ENCODE measurements at regions of chr15 and their contacts with region 1.

Region 1: DNA sequence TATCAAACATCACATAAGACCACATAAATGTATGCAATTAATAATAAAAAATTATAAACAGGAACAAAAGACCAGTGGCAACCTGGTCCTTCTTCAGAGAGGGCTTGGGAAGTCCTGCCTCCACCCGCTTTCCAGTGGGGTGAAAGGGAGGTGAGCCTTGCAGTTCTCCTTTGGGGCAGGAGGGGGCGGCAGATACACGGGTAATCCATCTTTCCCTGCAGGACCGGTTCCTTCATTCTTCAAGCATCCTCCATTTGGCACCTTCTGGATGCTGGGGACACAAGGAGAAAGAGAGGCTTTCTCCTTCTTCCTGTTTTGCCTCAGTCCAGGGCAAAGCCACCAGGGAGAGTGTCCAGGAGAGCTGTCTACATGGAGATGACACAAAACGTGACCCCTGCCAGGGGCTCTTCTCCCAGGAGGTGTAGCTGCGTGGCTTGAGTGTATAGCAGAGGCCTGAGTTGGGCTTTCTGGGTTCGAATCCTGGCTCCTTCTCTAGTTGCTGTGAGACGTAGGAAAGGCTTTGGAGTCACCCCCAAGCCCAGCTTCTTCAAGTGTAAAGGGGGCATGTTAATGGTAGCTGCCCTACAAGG is 23.2 kb downstream of the RPLP1 start:
- DNase-seq: peak; percentile 56
- H3K4me3 ChIP-seq: no peak overlapping the region
- H3K27ac ChIP-seq: no peak overlapping the region
- H3K4me1 ChIP-seq: no peaks in the 10 kb centered on the region
- CTCF ChIP-seq: peak; percentile 87

Region 2: GRCh38 chr15:68885070-68885469 is 590.8 kb before region 1 on chr15:
- CTCF ChIA-PET with region 1: no interaction called
- POLR2A ChIA-PET with region 1: no interaction called
- intact Hi-C with region 1: no loop called
- DNase-seq: no peak
- H3K4me3 ChIP-seq: no peak overlapping the region
- H3K27ac ChIP-seq: no peak overlapping the region
- H3K4me1 ChIP-seq: no peaks in the 10 kb centered on the region
- CTCF ChIP-seq: no peak

Region 3: GRCh38 chr15:69454953-69455352 is 20.9 kb before region 1 on chr15:
- CTCF ChIA-PET with region 1: no interaction called
- POLR2A ChIA-PET with region 1: no interaction called
- intact Hi-C with region 1: no loop called
- DNase-seq: no peak
- H3K4me3 ChIP-seq: peak overlapping the region; percentile 94
- H3K27ac ChIP-seq: peak overlapping the region; percentile 39
- H3K4me1 ChIP-seq: peaks cover 27% of the 10 kb centered on the region
- CTCF ChIP-seq: no peak

Region 4: DNA sequence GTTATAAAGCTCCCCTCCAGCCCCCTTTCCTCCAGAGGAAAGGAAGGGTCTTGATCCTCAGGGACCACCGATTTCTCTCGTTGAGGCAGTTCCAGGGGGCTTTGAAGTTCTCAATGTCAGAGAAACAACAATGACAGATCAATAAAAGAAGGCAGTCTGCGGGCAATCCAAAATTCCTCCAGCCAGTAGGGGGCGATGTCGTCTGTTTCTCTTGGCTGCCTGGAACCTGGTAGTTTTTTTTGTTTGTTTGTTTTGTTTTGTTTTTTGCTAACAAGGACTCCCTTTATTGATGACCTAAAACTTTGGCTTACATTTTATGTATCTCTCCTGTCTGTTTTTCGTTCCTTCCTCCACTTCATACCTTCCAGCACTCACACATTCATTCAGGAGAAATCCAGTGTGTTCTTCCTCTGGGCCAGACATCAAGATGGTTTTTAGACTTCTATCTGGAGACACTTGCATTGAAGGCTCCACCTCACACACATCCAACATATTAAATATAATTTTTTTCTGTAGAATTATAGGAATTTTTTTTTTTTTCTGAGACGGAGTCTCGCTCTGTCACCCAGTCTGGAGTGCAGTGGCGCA is 253.4 kb after region 1 on chr15:
- CTCF ChIA-PET with region 1: no interaction called
- POLR2A ChIA-PET with region 1: no interaction called
- intact Hi-C with region 1: loop called (anchors 5 kb)
- DNase-seq: peak; percentile 56
- H3K4me3 ChIP-seq: no peak overlapping the region
- H3K27ac ChIP-seq: no peak overlapping the region
- H3K4me1 ChIP-seq: no peaks in the 10 kb centered on the region
- CTCF ChIP-seq: peak; percentile 99

Region 5: DNA sequence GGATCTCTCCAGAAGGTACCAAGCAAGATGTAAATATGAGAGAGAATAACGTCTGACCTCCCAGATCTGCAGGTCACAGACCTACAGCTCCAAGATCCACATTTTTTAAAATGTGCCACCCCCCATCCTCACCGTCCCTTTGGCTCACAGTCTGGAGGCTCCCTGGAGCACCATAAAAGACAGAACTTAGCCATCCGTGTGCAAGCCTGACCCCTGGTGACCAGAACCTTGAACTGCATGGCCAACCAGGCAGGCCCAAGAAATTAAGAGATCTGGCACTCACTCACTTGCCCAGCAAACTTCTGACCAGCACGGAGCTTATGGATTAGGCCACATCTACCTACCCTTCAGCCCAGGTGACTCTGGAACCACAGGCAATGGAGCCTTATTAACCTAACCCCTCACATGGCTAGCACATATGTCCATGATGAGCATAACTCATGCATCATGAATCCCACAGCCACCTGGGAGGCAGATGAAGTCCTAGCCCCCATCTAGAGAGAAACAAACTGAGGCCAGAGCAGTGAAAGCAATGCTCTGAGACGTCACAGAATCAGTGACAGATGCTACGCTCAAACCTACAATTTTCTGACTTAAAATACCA is 1012.2 kb after region 1 on chr15:
- CTCF ChIA-PET with region 1: no interaction called
- POLR2A ChIA-PET with region 1: no interaction called
- intact Hi-C with region 1: loop called (anchors 5 kb)
- DNase-seq: peak; percentile 66
- H3K4me3 ChIP-seq: no peak overlapping the region
- H3K27ac ChIP-seq: no peak overlapping the region
- H3K4me1 ChIP-seq: peaks cover 33% of the 10 kb centered on the region
- CTCF ChIP-seq: peak; percentile 95

Region 6: DNA sequence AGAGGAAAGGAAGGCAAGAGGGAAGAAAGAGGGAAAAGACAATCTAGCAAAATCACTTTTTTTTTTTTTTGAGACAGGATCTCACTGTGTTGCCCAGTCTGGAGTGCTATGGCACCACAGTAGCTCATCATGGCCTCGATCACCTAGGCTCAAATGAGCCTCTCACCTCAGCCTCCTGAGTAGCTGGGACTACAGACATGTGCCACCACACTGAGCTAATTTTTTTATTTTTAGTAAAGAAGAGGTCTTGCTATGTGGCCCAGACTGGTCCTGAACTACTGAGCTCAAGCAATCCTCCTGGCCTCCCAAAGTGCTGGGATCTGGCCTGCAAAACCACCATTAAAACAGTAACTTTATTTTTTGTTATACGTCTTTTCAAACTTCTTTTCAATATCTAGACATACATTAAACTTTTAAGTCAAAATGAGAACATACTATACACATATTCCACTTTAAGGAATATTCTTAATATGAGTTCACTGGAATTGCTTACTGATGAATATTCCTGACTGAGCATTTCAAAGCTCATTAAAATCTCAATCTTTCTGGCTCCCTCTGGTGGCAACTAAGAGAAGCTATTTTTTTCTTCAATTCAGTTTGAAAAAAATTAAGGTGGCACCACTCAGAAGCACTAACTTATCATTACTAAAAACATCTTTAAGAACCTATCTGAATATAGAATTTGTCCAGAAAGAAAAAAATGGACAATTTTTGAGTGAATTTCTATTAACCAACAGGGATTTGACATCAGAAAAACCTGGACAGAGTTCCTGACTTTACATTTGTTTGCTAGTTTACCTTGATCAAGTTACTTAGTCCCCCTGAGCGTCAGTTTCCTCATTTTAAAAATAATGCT is 1246.6 kb after region 1 on chr15:
- CTCF ChIA-PET with region 1: no interaction called
- POLR2A ChIA-PET with region 1: no interaction called
- intact Hi-C with region 1: loop called (anchors 5 kb)
- DNase-seq: peak; percentile 45
- H3K4me3 ChIP-seq: no peak overlapping the region
- H3K27ac ChIP-seq: no peak overlapping the region
- H3K4me1 ChIP-seq: no peaks in the 10 kb centered on the region
- CTCF ChIP-seq: peak; percentile 94

Region 7: GRCh38 chr15:70810916-70811578 is 1335.2 kb after region 1 on chr15:
- CTCF ChIA-PET with region 1: no interaction called
- POLR2A ChIA-PET with region 1: no interaction called
- intact Hi-C with region 1: loop called (anchors 5 kb)
- DNase-seq: no peak
- H3K4me3 ChIP-seq: no peak overlapping the region
- H3K27ac ChIP-seq: no peak overlapping the region
- H3K4me1 ChIP-seq: no peaks in the 10 kb centered on the region
- CTCF ChIP-seq: no peak